H1 (cell line): ENCODE measurements at regions of chr12 and their contacts with region 1.

Region 1: GRCh38 chr12:57248934-57249742 is 1.8 kb downstream of the STAC3 start:
- DNase-seq: no peak
- H3K4me3 ChIP-seq: no peak overlapping the region
- H3K27ac ChIP-seq: no peak overlapping the region
- H3K4me1 ChIP-seq: peaks cover 2 to 10% (median 6%) of the 10 kb centered on the region in 4 experiments
- H3K27me3 ChIP-seq: peaks cover 0 to 7% (median 6%) of the 10 kb centered on the region in 4 experiments; a peak in 4 of 7 replicates
- CTCF ChIP-seq: no peak; a peak in 1 of 4 replicates
- EP300 ChIP-seq: no peak
- POLR2A ChIP-seq: no peak
- RAD21 ChIP-seq: no peak

Region 2: DNA sequence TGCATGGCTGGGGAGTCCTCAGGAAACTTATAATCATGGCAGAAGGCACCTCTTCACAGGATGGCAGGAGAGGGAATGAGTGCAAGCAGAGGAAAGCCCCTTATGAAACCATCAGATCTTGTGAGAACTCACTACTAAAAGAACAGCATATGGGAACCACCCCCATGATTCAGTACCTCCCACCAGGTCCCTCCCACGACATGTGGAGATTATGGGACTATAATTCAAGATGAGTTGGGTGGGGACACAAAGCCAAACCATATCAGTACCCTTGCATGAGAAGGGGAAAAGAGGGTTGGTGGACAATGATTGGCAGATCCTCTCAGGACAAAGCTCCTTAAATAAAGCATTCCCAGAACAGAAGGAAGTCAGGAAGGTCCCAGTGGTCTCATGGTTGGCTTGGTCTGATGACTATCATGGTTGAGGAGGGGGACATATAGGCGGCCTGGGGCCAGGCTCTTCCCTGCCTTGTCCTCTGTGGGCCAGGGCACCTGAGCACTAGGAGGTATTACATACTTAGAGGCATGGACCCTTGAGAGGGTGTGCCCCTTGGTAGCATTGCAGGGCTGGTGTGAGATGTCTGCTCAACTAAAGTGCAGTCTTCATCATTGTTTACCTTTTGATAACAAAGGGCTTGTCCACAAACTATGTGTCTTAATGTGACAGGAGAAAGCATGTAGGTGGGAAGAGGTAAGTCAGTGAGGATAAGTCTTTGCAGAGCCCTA is 463.8 kb before region 1 on chr12:
- CTCF ChIA-PET with region 1: no interaction called
- POLR2A ChIA-PET with region 1: no interaction called
- DNase-seq: no peak
- H3K4me3 ChIP-seq: no peak overlapping the region
- H3K27ac ChIP-seq: no peak overlapping the region
- H3K4me1 ChIP-seq: no peaks in the 10 kb centered on the region
- H3K27me3 ChIP-seq: no peaks in the 10 kb centered on the region
- CTCF ChIP-seq: no peak
- EP300 ChIP-seq: no peak
- POLR2A ChIP-seq: no peak
- RAD21 ChIP-seq: no peak

Region 3: GRCh38 chr12:57238854-57239554 is 10.1 kb before region 1 on chr12:
- CTCF ChIA-PET with region 1: interaction called, 527 read pairs
- POLR2A ChIA-PET with region 1: interaction called, 852 read pairs
- DNase-seq: peak in 1 of 2 experiments; percentile 98
- H3K4me3 ChIP-seq: peak overlapping the region; percentile 42 to 67 (median 54)
- H3K27ac ChIP-seq: no peak overlapping the region
- H3K4me1 ChIP-seq: peaks cover 6 to 68% (median 45%) of the 10 kb centered on the region in 4 experiments
- H3K27me3 ChIP-seq: peaks cover 59 to 80% (median 74%) of the 10 kb centered on the region in 4 experiments
- CTCF ChIP-seq: peak in 2 of 3 experiments; percentile 100; a peak in 3 of 4 replicates
- EP300 ChIP-seq: peak in 1 of 2 experiments; percentile 59; a peak in 1 of 3 replicates
- POLR2A ChIP-seq: peak in 1 of 2 experiments; percentile 24; a peak in 1 of 3 replicates
- RAD21 ChIP-seq: peak; percentile 85 to 91

Region 4: GRCh38 chr12:57272337-57273151 is 23.4 kb after region 1 on chr12:
- CTCF ChIA-PET with region 1: interaction called, 74 read pairs
- POLR2A ChIA-PET with region 1: interaction called, 6 read pairs
- DNase-seq: no peak
- H3K4me3 ChIP-seq: no peak overlapping the region
- H3K27ac ChIP-seq: no peak overlapping the region
- H3K4me1 ChIP-seq: no peaks in the 10 kb centered on the region; a peak in 1 of 7 replicates
- H3K27me3 ChIP-seq: no peaks in the 10 kb centered on the region
- CTCF ChIP-seq: no peak
- EP300 ChIP-seq: no peak
- POLR2A ChIP-seq: no peak
- RAD21 ChIP-seq: no peak

Region 5: DNA sequence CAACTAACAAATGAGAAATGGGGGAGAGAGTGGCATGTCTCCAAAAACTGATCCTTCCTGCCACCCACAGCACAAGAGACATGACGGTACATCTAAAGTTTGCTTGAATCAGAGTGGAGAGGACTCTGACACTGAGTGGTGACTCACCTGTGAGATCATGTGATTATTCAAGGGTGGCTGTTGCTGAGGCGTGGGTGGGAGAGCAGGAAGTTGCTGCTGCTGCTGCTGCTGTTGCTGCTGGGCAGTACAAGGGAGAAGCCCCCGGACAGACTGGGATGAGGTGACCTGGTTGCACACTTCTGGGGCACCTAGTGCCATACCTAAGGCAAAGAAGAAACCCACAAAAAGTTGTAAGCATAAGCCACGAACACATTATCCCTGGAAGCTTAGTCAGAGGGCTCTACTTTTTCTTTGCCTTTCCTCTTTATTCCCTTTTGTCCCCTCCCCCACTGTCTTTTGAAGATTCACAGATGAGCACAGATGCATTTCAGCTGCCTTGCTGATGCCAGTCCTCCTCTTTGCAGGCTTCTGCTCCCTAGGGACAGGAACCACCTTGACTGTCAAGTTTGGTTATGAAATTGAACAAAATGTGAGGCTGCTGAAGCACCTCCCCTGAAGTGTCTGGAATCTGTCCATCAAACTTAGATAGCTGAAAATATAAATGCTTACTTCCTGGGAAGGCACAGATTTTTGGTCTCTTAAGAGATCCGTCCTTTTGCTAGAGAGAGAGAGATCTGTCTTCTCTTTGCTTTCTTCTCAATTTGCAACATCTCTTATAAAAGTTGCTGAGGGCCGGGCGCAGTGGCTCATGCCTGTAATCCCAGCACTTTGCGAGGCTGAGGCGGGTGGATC is 31.3 kb after region 1 on chr12:
- CTCF ChIA-PET with region 1: interaction called, 21 read pairs
- POLR2A ChIA-PET with region 1: no interaction called
- DNase-seq: no peak
- H3K4me3 ChIP-seq: no peak overlapping the region
- H3K27ac ChIP-seq: no peak overlapping the region
- H3K4me1 ChIP-seq: 0 out of 7 replicates have a peak, but pooled peaks cover 0 to 2% (median 0%) of the 10 kb centered on the region in 4 experiments
- H3K27me3 ChIP-seq: no peaks in the 10 kb centered on the region
- CTCF ChIP-seq: no peak
- EP300 ChIP-seq: no peak
- POLR2A ChIP-seq: no peak
- RAD21 ChIP-seq: no peak